ENCODE measurements at regions of chr17 and their contacts with region 1.

Region 1: GRCh38 chr17:65561394-65562205 is at the start of gene AXIN2:
- ATAC-seq: peak; percentile 78 to 85 (median 80)
- H3K4me3 ChIP-seq: peak within 1 kb of the TSS; percentile 80 to 98 (median 92)
- H3K27ac ChIP-seq: peak within 1 kb of the TSS; percentile 91 to 96
- H3K4me1 ChIP-seq: peaks cover 15 to 36% of the 10 kb centered on the region in 2 donors
- total RNA-seq, gene AXIN2: 2.0 to 18.7 (median 8.4) TPM

Region 2: GRCh38 chr17:65294179-65294720 is 267.4 kb before region 1 on chr17:
- in situ Hi-C with region 1: loop called in 3 of 9 experiments (anchors 25 kb)
- ATAC-seq: peak; percentile 85 to 100 (median 94)
- H3K4me3 ChIP-seq: no peak overlapping the region
- H3K27ac ChIP-seq: no peak overlapping the region
- H3K4me1 ChIP-seq: no peaks in the 10 kb centered on the region

Region 3: GRCh38 chr17:65434251-65434650 is 127.3 kb before region 1 on chr17:
- in situ Hi-C with region 1: no loop called
- ATAC-seq: no peak
- H3K4me3 ChIP-seq: no peak overlapping the region
- H3K27ac ChIP-seq: no peak overlapping the region
- H3K4me1 ChIP-seq: no peaks in the 10 kb centered on the region

Region 4: DNA sequence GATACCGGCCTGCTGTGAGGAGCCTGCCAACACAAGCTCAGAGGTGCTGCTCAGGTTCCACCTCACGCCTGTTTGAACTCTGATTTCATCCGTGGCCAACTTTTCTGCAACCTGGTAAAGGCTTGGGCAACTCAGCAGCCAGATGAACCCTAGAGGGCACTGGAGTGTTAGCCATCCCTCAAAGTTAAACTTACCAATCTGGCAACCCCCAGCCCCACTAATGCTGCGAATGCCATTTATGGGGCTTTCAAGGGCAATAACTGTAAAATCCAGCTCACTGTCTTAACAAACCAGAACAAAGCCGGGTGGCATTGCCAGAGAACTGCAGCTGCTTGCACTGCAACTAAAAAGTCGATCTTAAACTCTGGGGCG is 105.6 kb before region 1 on chr17:
- in situ Hi-C with region 1: loop called in 1 of 9 experiments (anchors 25 kb)
- ATAC-seq: peak in 5 of 8 experiments; percentile 20 to 55 (median 40)
- H3K4me3 ChIP-seq: no peak overlapping the region
- H3K27ac ChIP-seq: no peak overlapping the region
- H3K4me1 ChIP-seq: peaks cover 3 to 7% of the 10 kb centered on the region in 2 donors

Region 5: DNA sequence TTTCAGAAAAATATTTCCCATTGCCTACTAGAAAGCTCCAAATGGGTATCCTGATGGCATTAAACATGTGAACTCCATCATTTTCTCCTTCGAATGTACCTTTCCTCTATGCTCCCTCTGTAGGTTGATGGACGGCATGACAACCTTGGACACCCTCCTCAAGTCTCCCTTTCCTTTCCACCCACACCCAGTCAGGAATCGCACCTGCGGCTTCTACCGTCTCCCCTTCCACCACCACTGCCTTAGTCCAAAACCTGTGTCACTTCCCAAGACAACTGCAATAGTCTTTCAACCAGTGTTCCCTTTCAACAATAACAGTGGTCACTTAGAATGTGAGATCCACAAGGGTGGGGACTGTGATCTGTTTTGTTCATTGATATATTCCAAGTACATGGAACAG is 233.0 kb after region 1 on chr17:
- in situ Hi-C with region 1: loop called in 1 of 9 experiments (anchors 25 kb)
- ATAC-seq: peak in 2 of 8 experiments; percentile 26 to 41
- H3K4me3 ChIP-seq: no peak overlapping the region
- H3K27ac ChIP-seq: no peak overlapping the region
- H3K4me1 ChIP-seq: peaks cover 0 to 5% of the 10 kb centered on the region in 2 donors

Region 6: DNA sequence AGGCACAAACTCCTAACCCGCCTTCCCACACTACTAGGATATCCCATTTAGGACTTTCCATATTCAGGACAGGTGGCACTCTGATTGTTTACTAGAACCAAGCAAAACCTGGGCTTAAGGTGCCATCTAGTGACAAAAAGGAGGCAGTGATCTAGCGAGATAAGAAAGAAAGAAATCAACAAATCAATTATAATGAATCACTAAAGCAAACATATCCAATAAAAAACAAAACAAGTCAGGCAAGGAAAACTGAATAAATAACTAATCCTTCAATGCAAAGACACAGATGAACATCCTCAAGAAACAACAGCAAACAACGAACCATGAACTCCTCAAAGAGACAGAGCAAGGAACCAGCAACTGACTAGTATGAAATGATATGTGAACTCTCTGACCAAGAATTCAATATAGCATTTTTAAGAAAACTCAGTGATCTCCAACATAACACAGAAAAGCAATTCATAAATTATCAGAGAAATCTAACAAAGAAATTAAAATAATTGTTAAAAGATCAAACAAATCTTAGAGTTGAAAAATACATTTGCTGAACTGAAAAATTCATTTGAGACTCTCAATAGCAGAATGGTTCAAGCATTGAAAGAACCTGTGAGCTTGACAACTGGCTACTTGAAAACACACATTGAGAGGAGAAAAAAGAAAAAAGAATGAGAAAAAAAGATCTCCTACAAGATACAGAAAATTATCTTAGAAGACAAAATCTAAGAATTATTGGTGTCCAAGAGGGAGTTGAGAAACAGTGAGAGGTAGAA is 426.7 kb after region 1 on chr17:
- in situ Hi-C with region 1: loop called in 1 of 9 experiments (anchors 25 kb)
- ATAC-seq: peak in 3 of 8 experiments; percentile 57 to 70 (median 64)
- H3K4me3 ChIP-seq: no peak overlapping the region
- H3K27ac ChIP-seq: no peak overlapping the region
- H3K4me1 ChIP-seq: no peaks in the 10 kb centered on the region

Region 7: GRCh38 chr17:66165513-66166123 is 604.0 kb after region 1 on chr17:
- in situ Hi-C with region 1: loop called in 1 of 9 experiments (anchors 25 kb)
- ATAC-seq: peak in 3 of 8 experiments; percentile 32 to 44 (median 38)
- H3K4me3 ChIP-seq: no peak overlapping the region
- H3K27ac ChIP-seq: no peak overlapping the region
- H3K4me1 ChIP-seq: no peaks in the 10 kb centered on the region

Measured in motor neuron (in vitro differentiated cells).